PC-9 (cell line): ENCODE measurements at regions of chr1 and their contacts with region 1.

Region 1: DNA sequence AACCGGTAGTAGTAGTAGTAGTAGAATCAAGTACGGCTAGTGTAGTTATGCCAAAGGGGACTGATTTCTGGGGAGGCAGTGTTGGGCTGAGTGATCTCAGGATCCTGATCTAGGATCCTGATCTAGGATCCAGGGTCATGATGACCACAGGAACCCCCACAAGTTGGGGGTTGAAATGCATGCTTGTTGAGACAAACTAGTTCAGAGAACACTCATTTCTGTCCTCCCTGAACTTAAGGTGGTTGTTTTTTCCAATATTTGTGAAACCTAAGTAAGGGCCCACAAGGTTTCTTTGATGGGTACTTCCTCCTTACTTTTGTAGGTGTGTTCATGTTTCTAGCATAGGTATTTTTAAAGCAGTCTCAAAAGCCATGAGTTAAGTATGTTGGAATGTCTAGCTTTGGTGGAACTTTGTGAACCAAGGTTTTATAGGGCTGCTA is 33.9 kb upstream of the PDC start:
- DNase-seq: peak in 1 of 2 experiments; percentile 63
- H3K4me3 ChIP-seq: no peak overlapping the region
- H3K27ac ChIP-seq: no peak overlapping the region; the same call in 1 of the 2 replicates
- H3K4me1 ChIP-seq: peaks cover 21% of the 10 kb centered on the region
- H3K27me3 ChIP-seq: no peaks in the 10 kb centered on the region
- CTCF ChIP-seq: no peak

Region 2: GRCh38 chr1:185886671-185887070 is 608.2 kb before region 1 on chr1:
- CTCF ChIA-PET with region 1: no interaction called
- POLR2A ChIA-PET with region 1: no interaction called
- intact Hi-C with region 1: no loop called
- DNase-seq: no peak
- H3K4me3 ChIP-seq: no peak overlapping the region
- H3K27ac ChIP-seq: no peak overlapping the region
- H3K4me1 ChIP-seq: no peaks in the 10 kb centered on the region
- H3K27me3 ChIP-seq: no peaks in the 10 kb centered on the region
- CTCF ChIP-seq: no peak

Region 3: GRCh38 chr1:186559601-186560116 is 64.8 kb after region 1 on chr1:
- CTCF ChIA-PET with region 1: no interaction called
- POLR2A ChIA-PET with region 1: no interaction called
- intact Hi-C with region 1: loop called (anchors 1 kb)
- DNase-seq: no peak
- H3K4me3 ChIP-seq: no peak overlapping the region
- H3K27ac ChIP-seq: peak overlapping the region; percentile 16
- H3K4me1 ChIP-seq: no peaks in the 10 kb centered on the region
- H3K27me3 ChIP-seq: no peaks in the 10 kb centered on the region
- CTCF ChIP-seq: no peak

Region 4: GRCh38 chr1:186574951-186575747 is 80.3 kb after region 1 on chr1:
- CTCF ChIA-PET with region 1: no interaction called
- POLR2A ChIA-PET with region 1: no interaction called
- intact Hi-C with region 1: loop called (anchors 5 kb)
- DNase-seq: no peak
- H3K4me3 ChIP-seq: no peak overlapping the region
- H3K27ac ChIP-seq: no peak overlapping the region
- H3K4me1 ChIP-seq: peaks cover 8% of the 10 kb centered on the region
- H3K27me3 ChIP-seq: no peaks in the 10 kb centered on the region
- CTCF ChIP-seq: no peak